Breast epithelium (tissue), 4 donors: ENCODE measurements at regions of chr22 and their contacts with region 1.

Region 1: GRCh38 chr22:50507991-50508884 is at the start of gene NCAPH2:
- DNase-seq: peak; percentile 92 to 98
- H3K4me3 ChIP-seq: peak within 1 kb of the TSS; percentile 92 to 95 (median 93)
- H3K27ac ChIP-seq: peak within 1 kb of the TSS; percentile 97 to 98
- H3K4me1 ChIP-seq: peaks cover 0 to 16% of the 10 kb centered on the region in 2 donors
- H3K27me3 ChIP-seq: no peaks in the 10 kb centered on the region
- CTCF ChIP-seq: no peak
- POLR2A ChIP-seq: peak; percentile 32
- total RNA-seq, gene NCAPH2: 25.9 to 48.2 (median 43.0) TPM

Region 2: GRCh38 chr22:50250555-50251476 is 257.4 kb before region 1 on chr22 and contains the start of gene HDAC10:
- intact Hi-C with region 1: loop called (anchors 10 kb)
- DNase-seq: peak in 1 of 2 donors; percentile 65
- H3K4me3 ChIP-seq: peak within 1 kb of the TSS; percentile 71 to 74 (median 71)
- H3K27ac ChIP-seq: peak within 1 kb of the TSS; percentile 75 to 80
- H3K4me1 ChIP-seq: peaks cover 12 to 15% of the 10 kb centered on the region in 2 donors
- H3K27me3 ChIP-seq: no peaks in the 10 kb centered on the region
- CTCF ChIP-seq: no peak
- POLR2A ChIP-seq: no peak
- total RNA-seq, gene HDAC10: 22.9 to 35.7 (median 29.4) TPM

Region 3: GRCh38 chr22:50530877-50531545 is 22.8 kb after region 1 on chr22:
- intact Hi-C with region 1: loop called (anchors 1 kb)
- DNase-seq: peak; percentile 85 to 90
- H3K4me3 ChIP-seq: peak overlapping the region; percentile 68 to 84 (median 68)
- H3K27ac ChIP-seq: peak overlapping the region; percentile 98 to 99
- H3K4me1 ChIP-seq: peaks cover 0 to 4% of the 10 kb centered on the region in 2 donors
- H3K27me3 ChIP-seq: no peaks in the 10 kb centered on the region
- CTCF ChIP-seq: no peak
- POLR2A ChIP-seq: peak; percentile 93